ENCODE measurements at regions of chr13 and their contacts with region 1.

Region 1: GRCh38 chr13:39051157-39051556 is 12.9 kb downstream of the NHLRC3 start:
- DNase-seq: peak in 2 of 9 experiments; percentile 37 to 52
- ATAC-seq: no peak
- H3K4me3 ChIP-seq: no peak overlapping the region
- H3K4me3 Mint-ChIP-seq: no peak overlapping the region
- H3K27ac ChIP-seq: no peak overlapping the region
- H3K27ac Mint-ChIP-seq: no peak overlapping the region
- H3K4me1 ChIP-seq: peaks cover 8% of the 10 kb centered on the region
- H3K4me1 Mint-ChIP-seq: peaks cover 15% of the 10 kb centered on the region
- H3K27me3 ChIP-seq: no peaks in the 10 kb centered on the region
- H3K27me3 Mint-ChIP-seq: no peaks in the 10 kb centered on the region
- CTCF ChIP-seq: no peak

Region 2: GRCh38 chr13:38013676-38014075 is 1037.5 kb before region 1 on chr13:
- CTCF ChIA-PET with region 1: no interaction called
- POLR2A ChIA-PET with region 1: no interaction called
- intact Hi-C with region 1: no loop called
- DNase-seq: no peak
- ATAC-seq: no peak
- H3K4me3 ChIP-seq: no peak overlapping the region
- H3K4me3 Mint-ChIP-seq: no peak overlapping the region
- H3K27ac ChIP-seq: no peak overlapping the region
- H3K27ac Mint-ChIP-seq: no peak overlapping the region
- H3K4me1 ChIP-seq: no peaks in the 10 kb centered on the region
- H3K4me1 Mint-ChIP-seq: no peaks in the 10 kb centered on the region
- H3K27me3 ChIP-seq: no peaks in the 10 kb centered on the region
- H3K27me3 Mint-ChIP-seq: no peaks in the 10 kb centered on the region
- CTCF ChIP-seq: no peak

Region 3: DNA sequence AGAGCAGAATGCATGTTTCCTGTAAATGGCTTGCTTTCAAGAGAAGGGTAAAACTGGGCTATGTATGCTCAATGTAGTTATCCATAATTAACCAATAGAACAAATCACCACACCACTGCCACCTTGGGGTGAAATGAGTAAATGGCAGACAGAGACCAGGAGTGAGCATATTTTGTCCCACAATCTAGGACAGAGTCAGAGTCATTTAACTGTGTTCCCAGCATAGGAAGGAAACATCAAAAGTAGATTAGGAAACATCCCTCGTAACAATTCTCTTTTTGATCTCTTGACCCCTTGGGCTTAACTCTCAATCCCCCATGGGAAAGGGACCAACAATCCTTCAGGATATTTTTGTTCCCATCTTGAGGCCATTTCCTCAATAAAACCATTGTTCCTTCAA is 211.9 kb after region 1 on chr13:
- CTCF ChIA-PET with region 1: no interaction called
- POLR2A ChIA-PET with region 1: no interaction called
- intact Hi-C with region 1: loop called in 1 of 2 experiments (anchors 5 kb)
- DNase-seq: peak in 2 of 9 experiments; percentile 10 to 21
- ATAC-seq: no peak
- H3K4me3 ChIP-seq: no peak overlapping the region
- H3K4me3 Mint-ChIP-seq: no peak overlapping the region
- H3K27ac ChIP-seq: no peak overlapping the region
- H3K27ac Mint-ChIP-seq: no peak overlapping the region
- H3K4me1 ChIP-seq: no peaks in the 10 kb centered on the region
- H3K4me1 Mint-ChIP-seq: no peaks in the 10 kb centered on the region
- H3K27me3 ChIP-seq: no peaks in the 10 kb centered on the region
- H3K27me3 Mint-ChIP-seq: peaks cover 7% of the 10 kb centered on the region
- CTCF ChIP-seq: peak; percentile 41